ENCODE measurements at regions of chr14 and their contacts with region 1.

Region 1: GRCh38 chr14:79167960-79168359 is 997.8 kb downstream of the NRXN3 start:
- DNase-seq: peak; percentile 3
- H3K4me3 ChIP-seq: no peak overlapping the region
- H3K27ac ChIP-seq: no peak overlapping the region
- H3K4me1 ChIP-seq: peaks cover 12% of the 10 kb centered on the region
- H3K27me3 ChIP-seq: no peaks in the 10 kb centered on the region
- CTCF ChIP-seq: no peak
- POLR2A ChIP-seq: no peak

Region 2: GRCh38 chr14:78967110-78967809 is 200.7 kb before region 1 on chr14:
- CTCF ChIA-PET with region 1: no interaction called
- POLR2A ChIA-PET with region 1: no interaction called
- dilution Hi-C with region 1: no loop called
- intact Hi-C with region 1: loop called (anchors 5 kb)
- DNase-seq: peak; percentile 56
- H3K4me3 ChIP-seq: no peak overlapping the region
- H3K27ac ChIP-seq: peak overlapping the region; percentile 60
- H3K4me1 ChIP-seq: peaks cover 33% of the 10 kb centered on the region
- H3K27me3 ChIP-seq: no peaks in the 10 kb centered on the region
- CTCF ChIP-seq: no peak
- POLR2A ChIP-seq: no peak

Region 3: GRCh38 chr14:79044894-79045624 is 122.9 kb before region 1 on chr14:
- CTCF ChIA-PET with region 1: interaction called, 3 read pairs
- POLR2A ChIA-PET with region 1: no interaction called
- dilution Hi-C with region 1: no loop called
- intact Hi-C with region 1: loop called (anchors 1 kb)
- DNase-seq: peak; percentile 86
- H3K4me3 ChIP-seq: peak overlapping the region in 1 of 3 experiments; percentile 18
- H3K27ac ChIP-seq: peak overlapping the region; percentile 82
- H3K4me1 ChIP-seq: peaks cover 14% of the 10 kb centered on the region
- H3K27me3 ChIP-seq: no peaks in the 10 kb centered on the region
- CTCF ChIP-seq: no peak
- POLR2A ChIP-seq: no peak